Panc1 (cell line): ENCODE measurements at regions of chr17 and their contacts with region 1.

Region 1: DNA sequence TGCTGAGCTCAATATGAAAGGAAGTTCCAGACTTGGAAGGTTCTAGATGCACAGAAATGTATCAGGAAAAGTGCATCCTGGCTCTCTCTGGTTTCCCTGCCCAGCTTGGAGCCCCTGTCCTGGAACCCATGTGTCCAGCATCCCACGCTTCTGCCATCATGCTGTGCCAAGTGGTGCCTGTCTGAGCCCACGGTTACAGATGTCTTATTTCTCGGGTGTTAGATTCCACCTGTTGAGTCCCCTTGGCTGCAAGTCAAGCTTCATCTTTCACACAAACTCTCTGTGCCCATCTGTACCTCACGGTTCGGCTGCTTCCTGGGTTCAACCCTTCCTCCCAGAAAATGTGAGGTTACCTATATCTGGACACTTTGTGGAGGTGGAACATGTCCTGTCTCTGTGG is 22.5 kb downstream of the OR1D5 start:
- DNase-seq: no peak
- ATAC-seq: no peak
- H3K4me3 ChIP-seq: no peak overlapping the region
- H3K27ac ChIP-seq: no peak overlapping the region
- H3K4me1 ChIP-seq: no peaks in the 10 kb centered on the region
- H3K27me3 ChIP-seq: no peaks in the 10 kb centered on the region; the same call in 1 of the 2 replicates
- CTCF ChIP-seq: no peak

Region 2: GRCh38 chr17:3738562-3739295 is 697.8 kb after region 1 on chr17:
- CTCF ChIA-PET with region 1: no interaction called
- POLR2A ChIA-PET with region 1: interaction called, 10 read pairs
- in situ Hi-C with region 1: no loop called
- intact Hi-C with region 1: no loop called
- DNase-seq: no peak
- ATAC-seq: no peak
- H3K4me3 ChIP-seq: no peak overlapping the region
- H3K27ac ChIP-seq: no peak overlapping the region
- H3K4me1 ChIP-seq: no peaks in the 10 kb centered on the region
- H3K27me3 ChIP-seq: no peaks in the 10 kb centered on the region
- CTCF ChIP-seq: no peak